Gastrocnemius medialis (tissue), 4 donors: ENCODE measurements at regions of chr3 and their contacts with region 1.

Region 1: GRCh38 chr3:5187156-5187919 is at the start of gene EDEM1:
- DNase-seq: peak; percentile 93 to 96
- ATAC-seq: peak; percentile 81
- H3K4me3 ChIP-seq: peak within 1 kb of the TSS; percentile 85 to 94 (median 90)
- H3K27ac ChIP-seq: peak within 1 kb of the TSS; percentile 93 to 97 (median 96)
- H3K4me1 ChIP-seq: peaks cover 13 to 40% of the 10 kb centered on the region in 2 donors
- H3K27me3 ChIP-seq: no peaks in the 10 kb centered on the region
- CTCF ChIP-seq: no peak
- POLR2A ChIP-seq: peak; percentile 92 to 96
- total RNA-seq, gene EDEM1: 7.8 to 12.3 (median 11.4) TPM

Region 2: GRCh38 chr3:4914464-4914863 is 272.9 kb before region 1 on chr3:
- in situ Hi-C with region 1: no loop called
- intact Hi-C with region 1: no loop called
- DNase-seq: no peak
- ATAC-seq: no peak
- H3K4me3 ChIP-seq: no peak overlapping the region
- H3K27ac ChIP-seq: no peak overlapping the region
- H3K4me1 ChIP-seq: no peaks in the 10 kb centered on the region
- H3K27me3 ChIP-seq: no peaks in the 10 kb centered on the region
- CTCF ChIP-seq: no peak
- POLR2A ChIP-seq: no peak

Region 3: GRCh38 chr3:5136211-5136918 is 51.0 kb before region 1 on chr3:
- in situ Hi-C with region 1: loop called in 1 of 4 experiments (anchors 10 kb)
- intact Hi-C with region 1: loop called (anchors 2 kb)
- DNase-seq: no peak
- ATAC-seq: peak; percentile 45 to 46
- H3K4me3 ChIP-seq: no peak overlapping the region
- H3K27ac ChIP-seq: peak overlapping the region; percentile 45 to 69 (median 57)
- H3K4me1 ChIP-seq: peaks cover 83 to 95% of the 10 kb centered on the region in 2 donors
- H3K27me3 ChIP-seq: no peaks in the 10 kb centered on the region
- CTCF ChIP-seq: peak in 2 of 5 experiments; percentile 12 to 35
- POLR2A ChIP-seq: no peak

Region 4: GRCh38 chr3:5165698-5166097 is 21.6 kb before region 1 on chr3:
- in situ Hi-C with region 1: no loop called
- intact Hi-C with region 1: loop called (anchors 2 kb)
- DNase-seq: peak in 1 of 2 donors; percentile 33
- ATAC-seq: peak; percentile 97 to 98
- H3K4me3 ChIP-seq: peak overlapping the region in 1 of 4 donors; percentile 21
- H3K27ac ChIP-seq: peak overlapping the region; percentile 51 to 86 (median 67)
- H3K4me1 ChIP-seq: peaks cover 65 to 80% of the 10 kb centered on the region in 2 donors
- H3K27me3 ChIP-seq: no peaks in the 10 kb centered on the region
- CTCF ChIP-seq: no peak
- POLR2A ChIP-seq: no peak